ENCODE measurements at regions of chr5 and their contacts with region 1.

Region 1: DNA sequence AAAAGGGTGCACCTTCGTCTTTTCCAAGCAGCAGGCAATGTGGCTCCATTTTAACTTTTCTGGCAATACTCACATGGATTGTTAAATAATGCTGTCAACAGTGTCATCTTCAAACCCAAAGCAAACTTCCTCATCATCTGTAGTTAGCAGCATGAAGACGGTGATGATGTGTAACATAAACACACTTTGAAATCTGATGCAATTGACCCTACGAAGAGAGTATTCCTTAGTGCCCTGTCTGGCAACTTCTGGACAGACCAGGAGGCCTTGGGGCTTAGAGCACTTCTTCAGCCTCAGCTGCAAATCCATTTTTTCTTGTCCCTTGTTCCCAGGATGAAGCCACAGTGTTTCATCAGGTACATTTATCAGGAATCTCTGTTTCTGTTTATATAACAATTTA is 149.1 kb downstream of the GHR start:
- DNase-seq: no peak
- H3K4me3 ChIP-seq: no peak overlapping the region
- H3K27ac ChIP-seq: no peak overlapping the region
- H3K4me1 ChIP-seq: no peaks in the 10 kb centered on the region
- H3K27me3 ChIP-seq: peaks cover 0 to 2% (median 0%) of the 10 kb centered on the region in 5 experiments

Region 2: GRCh38 chr5:42483472-42484154 is 88.7 kb before region 1 on chr5:
- CTCF ChIA-PET with region 1: no interaction called
- POLR2A ChIA-PET with region 1: no interaction called
- DNase-seq: no peak
- H3K4me3 ChIP-seq: no peak overlapping the region
- H3K27ac ChIP-seq: no peak overlapping the region
- H3K4me1 ChIP-seq: no peaks in the 10 kb centered on the region
- H3K27me3 ChIP-seq: no peaks in the 10 kb centered on the region

Region 3: GRCh38 chr5:42555797-42556196 is 16.5 kb before region 1 on chr5:
- CTCF ChIA-PET with region 1: no interaction called
- POLR2A ChIA-PET with region 1: no interaction called
- DNase-seq: no peak
- H3K4me3 ChIP-seq: no peak overlapping the region
- H3K27ac ChIP-seq: no peak overlapping the region
- H3K4me1 ChIP-seq: no peaks in the 10 kb centered on the region
- H3K27me3 ChIP-seq: no peaks in the 10 kb centered on the region

Region 4: DNA sequence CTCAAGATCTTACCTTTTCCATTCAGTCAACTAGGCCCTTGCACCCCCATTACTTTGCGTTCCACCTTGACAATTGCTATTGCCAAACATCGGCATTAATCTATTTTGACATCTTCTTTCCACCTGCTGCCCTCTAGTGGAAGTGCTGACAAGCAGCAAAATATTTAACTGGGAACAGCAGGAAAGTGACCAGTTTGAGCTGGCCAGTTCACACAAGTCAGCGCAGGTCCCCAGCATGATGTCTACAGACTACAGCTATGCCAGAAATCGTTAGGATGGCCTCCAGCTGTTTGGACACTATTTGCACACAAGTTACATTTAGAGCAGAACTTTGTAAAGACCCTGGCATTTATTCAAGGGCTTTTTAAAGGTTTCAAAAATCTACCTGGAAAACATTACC is 11.0 kb after region 1 on chr5:
- CTCF ChIA-PET with region 1: interaction called, 10 read pairs
- POLR2A ChIA-PET with region 1: no interaction called
- DNase-seq: peak; percentile 62 to 72 (median 67)
- H3K4me3 ChIP-seq: no peak overlapping the region
- H3K27ac ChIP-seq: no peak overlapping the region
- H3K4me1 ChIP-seq: peaks cover 0 to 17% (median 7%) of the 10 kb centered on the region in 4 experiments
- H3K27me3 ChIP-seq: no peaks in the 10 kb centered on the region

Region 5: GRCh38 chr5:42612750-42613366 is 40.5 kb after region 1 on chr5:
- CTCF ChIA-PET with region 1: no interaction called
- POLR2A ChIA-PET with region 1: no interaction called
- DNase-seq: no peak
- H3K4me3 ChIP-seq: no peak overlapping the region
- H3K27ac ChIP-seq: no peak overlapping the region
- H3K4me1 ChIP-seq: no peaks in the 10 kb centered on the region
- H3K27me3 ChIP-seq: no peaks in the 10 kb centered on the region